Activated naive CD4-positive, alpha-beta T cell treated with anti-CD3 and anti-CD28 coated beads for 36 hours (primary cell): ENCODE measurements at regions of chrX and their contacts with region 1.

Region 1: DNA sequence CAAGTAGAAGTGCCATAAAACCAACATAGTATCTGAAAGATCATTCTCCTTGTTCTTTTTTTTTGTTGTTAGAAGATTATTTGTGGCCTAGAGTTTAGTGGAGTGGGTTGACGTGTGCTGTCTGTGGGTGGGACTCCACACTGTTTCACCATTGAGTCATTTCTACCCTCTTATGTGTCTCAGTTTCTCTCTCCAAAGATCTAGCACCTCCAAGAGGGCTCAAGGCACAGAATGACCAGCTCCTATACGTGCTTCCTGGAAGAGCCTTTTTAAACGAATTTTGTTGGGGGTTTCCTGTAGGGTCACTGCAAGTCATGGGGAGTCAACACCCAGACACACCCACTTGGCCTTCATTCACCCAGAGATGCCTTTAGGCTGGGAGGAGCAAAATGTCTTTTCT is 150.1 kb downstream of the KLF8 start:
- DNase-seq: peak; percentile 41
- H3K4me3 Mint-ChIP-seq: no peak overlapping the region
- H3K27ac Mint-ChIP-seq: peak overlapping the region; percentile 82
- H3K4me1 Mint-ChIP-seq: peaks cover 44% of the 10 kb centered on the region
- H3K27me3 Mint-ChIP-seq: no peaks in the 10 kb centered on the region

Region 2: DNA sequence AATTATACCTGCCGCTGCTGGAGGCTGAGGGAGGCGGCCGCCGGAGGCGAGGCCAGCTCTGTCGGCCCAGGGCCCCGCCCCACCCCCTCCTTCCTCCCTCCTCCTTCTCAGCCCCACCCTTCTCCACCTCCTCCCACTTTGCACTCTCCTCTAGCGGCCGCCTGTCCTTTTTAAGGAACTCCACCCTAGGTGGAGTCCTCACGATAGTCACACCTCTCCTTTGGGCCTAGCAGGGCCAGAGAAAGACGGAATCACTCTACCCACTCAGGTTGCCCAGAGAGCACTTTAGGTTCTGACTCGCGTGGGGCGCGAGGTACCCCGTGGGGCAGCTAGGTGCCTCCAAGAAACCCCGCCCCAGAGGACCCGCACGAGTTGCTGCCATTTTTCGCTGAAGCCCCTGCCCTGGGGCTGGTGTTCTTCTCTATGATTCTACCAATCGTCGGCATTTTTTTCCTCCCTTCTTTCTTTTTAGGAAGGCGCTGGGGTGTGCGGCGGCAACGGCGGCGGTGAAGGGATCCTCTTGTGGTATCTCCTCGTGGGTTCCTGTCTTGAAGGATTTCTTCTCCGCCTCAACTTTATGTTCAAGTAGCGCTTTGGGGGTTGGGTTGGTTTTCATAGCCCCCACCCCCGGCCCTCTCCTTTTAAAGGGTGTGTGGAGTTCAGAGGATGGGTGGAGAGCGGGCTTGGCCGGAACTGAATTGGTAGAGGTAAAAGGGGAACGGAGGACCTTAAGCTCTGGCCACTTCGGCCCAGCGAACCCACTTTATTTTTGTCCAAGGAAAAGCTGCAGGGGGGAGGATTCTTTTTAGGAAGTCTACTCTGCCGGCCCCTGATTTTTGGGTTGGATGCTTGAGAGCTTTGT is 149.8 kb before region 1 on chrX and contains the start of gene KLF8:
- CTCF ChIA-PET with region 1: no interaction called
- intact Hi-C with region 1: no loop called
- DNase-seq: peak; percentile 56
- H3K4me3 Mint-ChIP-seq: peak within 1 kb of the TSS; percentile 74
- H3K27ac Mint-ChIP-seq: no peak within 1 kb of the TSS
- H3K4me1 Mint-ChIP-seq: no peaks in the 10 kb centered on the region
- H3K27me3 Mint-ChIP-seq: no peaks in the 10 kb centered on the region
- total RNA-seq, gene KLF8: 1.0 to 1.3 TPM

Region 3: GRCh38 chrX:56366901-56367300 is 15.4 kb before region 1 on chrX:
- CTCF ChIA-PET with region 1: no interaction called
- intact Hi-C with region 1: loop called (anchors 2 kb)
- DNase-seq: peak; percentile 14
- H3K4me3 Mint-ChIP-seq: no peak overlapping the region
- H3K27ac Mint-ChIP-seq: peak overlapping the region; percentile 41
- H3K4me1 Mint-ChIP-seq: peaks cover 51% of the 10 kb centered on the region
- H3K27me3 Mint-ChIP-seq: no peaks in the 10 kb centered on the region